PC-9 (cell line): ENCODE measurements at regions of chr4 and their contacts with region 1.

Region 1: GRCh38 chr4:186676531-186677161 is 47.0 kb downstream of the FAT1 start:
- DNase-seq: peak; percentile 45 to 72
- H3K4me3 ChIP-seq: no peak overlapping the region
- H3K27ac ChIP-seq: no peak overlapping the region
- H3K4me1 ChIP-seq: no peaks in the 10 kb centered on the region
- H3K27me3 ChIP-seq: no peaks in the 10 kb centered on the region
- CTCF ChIP-seq: no peak

Region 2: GRCh38 chr4:186643501-186644310 is 32.9 kb before region 1 on chr4:
- CTCF ChIA-PET with region 1: no interaction called
- POLR2A ChIA-PET with region 1: no interaction called
- intact Hi-C with region 1: loop called (anchors 5 kb)
- DNase-seq: peak in 1 of 2 experiments; percentile 82
- H3K4me3 ChIP-seq: 0 out of 2 replicates have a peak overlapping the region, but pooled peaks have one; percentile 17
- H3K27ac ChIP-seq: peak overlapping the region; percentile 71
- H3K4me1 ChIP-seq: peaks cover 16% of the 10 kb centered on the region
- H3K27me3 ChIP-seq: no peaks in the 10 kb centered on the region
- CTCF ChIP-seq: no peak

Region 3: DNA sequence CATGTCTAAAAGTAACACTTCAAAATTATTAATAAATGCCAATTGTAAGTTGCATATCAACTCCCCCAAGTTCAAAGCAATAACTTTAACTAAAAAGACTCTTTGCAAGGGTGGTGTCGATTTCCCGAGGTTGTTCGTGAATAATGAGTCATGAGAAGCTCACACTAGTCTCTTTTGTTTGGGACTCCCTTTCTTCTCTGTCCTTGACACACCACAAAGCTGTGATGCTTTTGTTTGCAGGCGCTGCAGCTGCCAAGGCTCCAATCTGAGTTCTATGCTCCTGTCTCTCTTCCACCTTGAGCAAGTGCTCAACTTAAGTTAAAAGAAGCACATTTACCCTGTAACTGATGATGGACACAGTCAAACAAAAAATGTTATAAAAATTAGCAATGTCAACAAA is 18.9 kb before region 1 on chr4:
- CTCF ChIA-PET with region 1: no interaction called
- POLR2A ChIA-PET with region 1: no interaction called
- intact Hi-C with region 1: no loop called
- DNase-seq: no peak
- H3K4me3 ChIP-seq: no peak overlapping the region
- H3K27ac ChIP-seq: no peak overlapping the region
- H3K4me1 ChIP-seq: no peaks in the 10 kb centered on the region
- H3K27me3 ChIP-seq: no peaks in the 10 kb centered on the region
- CTCF ChIP-seq: no peak